MCF 10A (cell line): ENCODE measurements at regions of chr9 and their contacts with region 1.

Region 1: DNA sequence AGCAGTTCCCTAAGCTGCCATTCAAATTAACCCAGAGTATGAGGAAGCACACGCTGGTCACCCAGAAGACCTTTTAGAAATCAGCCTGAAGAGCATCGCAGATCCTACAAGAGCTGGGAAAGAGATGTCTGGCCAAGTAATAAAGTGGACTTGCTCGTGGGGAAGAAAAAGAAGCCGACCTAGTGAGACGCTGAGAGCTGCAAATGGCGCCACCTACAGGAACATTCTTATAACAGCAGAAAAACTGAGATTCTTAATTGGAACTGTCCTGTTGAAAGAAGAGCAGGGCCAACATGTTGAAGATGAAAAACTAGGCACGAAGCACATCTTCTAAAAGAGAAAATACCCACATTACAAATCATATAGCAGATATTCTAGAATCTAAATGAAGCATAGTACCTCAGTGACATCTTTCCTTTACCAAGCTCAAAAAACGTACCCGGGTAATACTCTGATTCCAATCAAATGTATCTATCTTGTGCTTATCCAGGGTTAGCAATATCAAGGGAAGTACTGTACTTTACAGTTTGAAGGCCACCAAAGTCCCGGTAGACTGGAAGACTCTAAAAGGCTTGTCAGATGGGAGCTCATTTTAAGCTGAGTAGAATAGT is 3.9 kb upstream of the GNAQ start:
- DNase-seq: peak; percentile 84
- H3K4me3 Mint-ChIP-seq: no peak overlapping the region
- H3K27ac Mint-ChIP-seq: no peak overlapping the region
- H3K4me1 Mint-ChIP-seq: peaks cover 16% of the 10 kb centered on the region
- H3K27me3 Mint-ChIP-seq: no peaks in the 10 kb centered on the region
- CTCF ChIP-seq: peak; percentile 62

Region 2: GRCh38 chr9:77456829-77457437 is 578.6 kb before region 1 on chr9:
- CTCF ChIA-PET with region 1: interaction called, 13 read pairs
- POLR2A ChIA-PET with region 1: no interaction called
- intact Hi-C with region 1: no loop called
- DNase-seq: peak; percentile 93
- H3K4me3 Mint-ChIP-seq: no peak overlapping the region
- H3K27ac Mint-ChIP-seq: no peak overlapping the region
- H3K4me1 Mint-ChIP-seq: peaks cover 10% of the 10 kb centered on the region
- H3K27me3 Mint-ChIP-seq: peaks cover 12% of the 10 kb centered on the region
- CTCF ChIP-seq: peak; percentile 77

Region 3: GRCh38 chr9:77764894-77765780 is 270.4 kb before region 1 on chr9:
- CTCF ChIA-PET with region 1: interaction called, 11 read pairs
- POLR2A ChIA-PET with region 1: no interaction called
- intact Hi-C with region 1: no loop called
- DNase-seq: peak; percentile 40
- H3K4me3 Mint-ChIP-seq: no peak overlapping the region
- H3K27ac Mint-ChIP-seq: no peak overlapping the region
- H3K4me1 Mint-ChIP-seq: no peaks in the 10 kb centered on the region
- H3K27me3 Mint-ChIP-seq: no peaks in the 10 kb centered on the region
- CTCF ChIP-seq: peak; percentile 41

Region 4: DNA sequence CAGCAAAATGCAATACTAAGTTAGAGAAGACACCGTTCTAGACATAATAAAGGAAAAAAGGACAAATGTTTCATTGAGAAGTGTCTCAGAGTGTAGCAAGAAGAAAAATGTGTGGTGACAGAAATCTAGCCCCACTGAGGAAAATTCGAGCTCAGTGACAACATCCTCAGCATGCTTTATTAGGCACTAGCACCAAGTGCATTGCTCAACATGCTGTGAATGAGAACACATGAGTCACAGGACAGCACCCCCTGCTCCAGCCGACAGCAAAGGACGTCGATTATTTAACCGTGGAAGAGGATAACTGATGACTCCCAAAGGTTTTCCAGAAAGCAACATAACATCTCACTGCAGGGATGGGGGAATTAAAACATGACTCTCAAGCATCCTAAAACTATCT is 186.6 kb before region 1 on chr9:
- CTCF ChIA-PET with region 1: interaction called, 10 read pairs
- POLR2A ChIA-PET with region 1: interaction called, 3 read pairs
- intact Hi-C with region 1: loop called (anchors 2 kb)
- DNase-seq: peak; percentile 88
- H3K4me3 Mint-ChIP-seq: no peak overlapping the region
- H3K27ac Mint-ChIP-seq: peak overlapping the region; percentile 75
- H3K4me1 Mint-ChIP-seq: peaks cover 8% of the 10 kb centered on the region
- H3K27me3 Mint-ChIP-seq: no peaks in the 10 kb centered on the region
- CTCF ChIP-seq: no peak

Region 5: DNA sequence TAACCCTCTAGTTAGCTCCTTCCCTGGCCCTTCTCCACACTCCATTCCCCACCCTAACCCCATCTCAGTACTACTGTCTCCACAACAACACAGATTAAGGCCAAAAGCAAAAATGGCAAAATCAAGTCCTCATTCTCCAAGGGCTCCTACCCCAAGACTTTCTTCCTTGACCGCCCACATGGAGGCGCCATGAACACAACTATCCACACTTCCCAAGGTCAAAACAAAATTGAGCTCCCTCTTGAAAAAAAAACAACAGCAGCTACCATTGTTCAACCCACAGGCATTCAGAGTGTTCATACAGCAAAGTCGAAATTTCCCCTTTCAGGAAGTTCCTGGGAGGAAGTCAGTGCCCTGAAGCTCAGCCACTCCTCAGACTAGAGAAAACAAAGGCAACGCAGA is 58.3 kb before region 1 on chr9:
- CTCF ChIA-PET with region 1: interaction called, 64 read pairs
- POLR2A ChIA-PET with region 1: interaction called, 30 read pairs
- intact Hi-C with region 1: loop called (anchors 1 kb)
- DNase-seq: peak; percentile 78
- H3K4me3 Mint-ChIP-seq: no peak overlapping the region
- H3K27ac Mint-ChIP-seq: peak overlapping the region; percentile 43
- H3K4me1 Mint-ChIP-seq: peaks cover 35% of the 10 kb centered on the region
- H3K27me3 Mint-ChIP-seq: no peaks in the 10 kb centered on the region
- CTCF ChIP-seq: peak; percentile 42

Region 6: GRCh38 chr9:78121488-78121887 is 86.0 kb after region 1 on chr9:
- CTCF ChIA-PET with region 1: interaction called, 31 read pairs
- POLR2A ChIA-PET with region 1: interaction called, 9 read pairs
- intact Hi-C with region 1: loop called (anchors 1 kb)
- DNase-seq: peak; percentile 80
- H3K4me3 Mint-ChIP-seq: no peak overlapping the region
- H3K27ac Mint-ChIP-seq: no peak overlapping the region
- H3K4me1 Mint-ChIP-seq: peaks cover 30% of the 10 kb centered on the region
- H3K27me3 Mint-ChIP-seq: no peaks in the 10 kb centered on the region
- CTCF ChIP-seq: peak; percentile 66

Region 7: DNA sequence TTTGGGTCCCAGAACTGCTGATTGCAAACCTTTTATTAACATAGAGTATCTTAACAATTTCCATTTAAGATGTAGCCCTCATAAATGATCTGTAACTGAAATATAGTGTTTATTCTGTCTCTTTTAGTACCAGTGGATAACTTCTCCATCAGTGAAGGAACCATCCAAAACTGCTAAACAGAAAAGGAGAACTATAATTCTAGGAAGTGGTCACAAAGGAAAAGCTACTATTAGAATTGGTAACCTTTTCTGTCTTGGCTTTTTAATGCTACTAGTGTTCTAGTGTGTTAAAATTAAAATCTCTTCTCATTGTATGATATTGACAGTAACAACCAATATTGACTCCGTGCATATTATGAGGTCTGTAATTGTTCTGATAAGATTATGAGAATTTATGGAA is 213.1 kb after region 1 on chr9:
- CTCF ChIA-PET with region 1: no interaction called
- POLR2A ChIA-PET with region 1: no interaction called
- intact Hi-C with region 1: no loop called
- DNase-seq: no peak
- H3K4me3 Mint-ChIP-seq: no peak overlapping the region
- H3K27ac Mint-ChIP-seq: no peak overlapping the region
- H3K4me1 Mint-ChIP-seq: no peaks in the 10 kb centered on the region
- H3K27me3 Mint-ChIP-seq: no peaks in the 10 kb centered on the region
- CTCF ChIP-seq: no peak

Region 8: DNA sequence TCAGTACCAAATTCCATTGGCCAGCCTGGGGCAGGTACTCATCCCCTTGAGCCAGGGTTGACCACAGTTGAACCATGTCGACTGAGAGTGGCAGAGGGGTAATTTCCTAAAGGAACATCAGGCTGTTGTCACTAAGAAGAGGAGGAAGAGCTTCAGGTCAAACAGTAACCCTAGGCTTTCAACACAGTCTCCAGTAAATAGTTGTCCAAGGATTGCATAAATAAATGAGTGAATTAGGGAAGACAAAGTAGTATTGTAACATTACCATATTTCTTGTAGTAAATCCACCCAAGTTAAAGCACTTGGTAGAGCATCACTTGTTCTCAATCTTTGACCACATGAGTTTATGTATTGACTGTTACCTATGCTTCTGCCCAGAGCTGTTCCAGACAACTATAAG is 268.9 kb after region 1 on chr9:
- CTCF ChIA-PET with region 1: no interaction called
- POLR2A ChIA-PET with region 1: no interaction called
- intact Hi-C with region 1: no loop called
- DNase-seq: no peak
- H3K4me3 Mint-ChIP-seq: no peak overlapping the region
- H3K27ac Mint-ChIP-seq: no peak overlapping the region
- H3K4me1 Mint-ChIP-seq: peaks cover 8% of the 10 kb centered on the region
- H3K27me3 Mint-ChIP-seq: no peaks in the 10 kb centered on the region
- CTCF ChIP-seq: no peak